ENCODE measurements at regions of chr7 and their contacts with region 1.

Region 1: GRCh38 chr7:27196287-27196767 is 3.6 kb downstream of the HOXA13 start:
- DNase-seq: peak; percentile 16
- ATAC-seq: peak; percentile 68
- H3K4me3 ChIP-seq: no peak overlapping the region
- H3K27ac ChIP-seq: no peak overlapping the region
- H3K4me1 ChIP-seq: no peaks in the 10 kb centered on the region; the same call in 1 of the 2 replicates
- H3K27me3 ChIP-seq: peaks cover 22 to 40% of the 10 kb centered on the region in 2 experiments
- CTCF ChIP-seq: peak; percentile 70 to 89 (median 74)
- EP300 ChIP-seq: no peak
- POLR2A ChIP-seq: no peak
- RAD21 ChIP-seq: peak; percentile 94

Region 2: DNA sequence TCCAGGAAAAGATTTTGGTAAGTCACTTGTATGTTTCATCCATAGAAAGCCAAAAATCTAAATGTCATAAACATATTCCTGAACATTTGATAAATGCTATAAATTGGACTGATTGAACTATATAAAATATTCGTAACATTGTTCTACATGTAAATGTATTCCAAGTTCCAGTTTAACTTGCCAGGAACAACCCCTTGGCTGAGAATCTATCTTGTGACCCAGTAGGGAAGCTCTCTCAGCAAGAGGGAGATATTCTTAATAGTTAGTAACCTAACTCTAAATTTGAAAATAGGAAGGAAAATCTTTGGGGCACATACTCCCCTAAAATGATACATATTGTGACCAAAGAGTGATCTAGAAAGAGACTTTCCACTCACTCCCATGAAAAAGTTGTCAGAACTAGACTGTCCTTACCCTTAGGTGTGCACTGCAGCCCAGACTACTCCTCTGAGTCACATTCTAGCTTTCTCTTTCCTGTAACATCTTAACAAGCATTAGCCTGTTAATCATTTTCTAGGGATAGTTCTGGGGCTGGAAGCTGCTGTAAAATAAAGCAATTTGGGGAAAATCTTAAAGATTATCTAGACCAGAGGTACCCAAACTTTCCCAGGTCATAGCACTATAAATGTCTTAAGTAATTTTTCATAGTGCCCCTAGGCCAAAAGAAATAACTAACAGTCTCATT is 258.2 kb before region 1 on chr7:
- CTCF ChIA-PET with region 1: no interaction called
- POLR2A ChIA-PET with region 1: no interaction called
- RAD21 ChIA-PET with region 1: no interaction called
- SMC1A ChIA-PET with region 1: no interaction called
- in situ Hi-C with region 1: no loop called
- intact Hi-C with region 1: no loop called
- DNase-seq: no peak
- ATAC-seq: peak; percentile 41; the same call in 1 of the 3 replicates
- H3K4me3 ChIP-seq: no peak overlapping the region
- H3K27ac ChIP-seq: no peak overlapping the region
- H3K4me1 ChIP-seq: no peaks in the 10 kb centered on the region
- H3K27me3 ChIP-seq: no peaks in the 10 kb centered on the region; a peak in 1 of 4 replicates
- CTCF ChIP-seq: no peak
- EP300 ChIP-seq: no peak
- POLR2A ChIP-seq: no peak
- RAD21 ChIP-seq: no peak

Region 3: GRCh38 chr7:27605689-27606269 is 409.5 kb after region 1 on chr7:
- CTCF ChIA-PET with region 1: interaction called, 50 read pairs
- POLR2A ChIA-PET with region 1: no interaction called
- RAD21 ChIA-PET with region 1: interaction called, 32 read pairs
- SMC1A ChIA-PET with region 1: interaction called, 14 read pairs
- in situ Hi-C with region 1: no loop called
- intact Hi-C with region 1: loop called (anchors 2 kb)
- DNase-seq: no peak
- ATAC-seq: no peak
- H3K4me3 ChIP-seq: no peak overlapping the region
- H3K27ac ChIP-seq: no peak overlapping the region
- H3K4me1 ChIP-seq: no peaks in the 10 kb centered on the region
- H3K27me3 ChIP-seq: no peaks in the 10 kb centered on the region
- CTCF ChIP-seq: peak in 2 of 3 experiments; percentile 33 to 44; a peak in 4 of 6 replicates
- EP300 ChIP-seq: no peak
- POLR2A ChIP-seq: no peak
- RAD21 ChIP-seq: peak; percentile 30

Region 4: GRCh38 chr7:27784393-27785053 is 588.2 kb after region 1 on chr7:
- CTCF ChIA-PET with region 1: interaction called, 8 read pairs
- POLR2A ChIA-PET with region 1: no interaction called
- RAD21 ChIA-PET with region 1: interaction called, 5 read pairs
- SMC1A ChIA-PET with region 1: interaction called, 6 read pairs
- in situ Hi-C with region 1: loop called (anchors 5 kb)
- intact Hi-C with region 1: loop called (anchors 5 kb)
- DNase-seq: no peak
- ATAC-seq: peak; percentile 60
- H3K4me3 ChIP-seq: no peak overlapping the region
- H3K27ac ChIP-seq: no peak overlapping the region
- H3K4me1 ChIP-seq: no peaks in the 10 kb centered on the region
- H3K27me3 ChIP-seq: no peaks in the 10 kb centered on the region
- CTCF ChIP-seq: peak; percentile 33 to 45 (median 39); a peak in 5 of 6 replicates
- EP300 ChIP-seq: no peak
- POLR2A ChIP-seq: no peak
- RAD21 ChIP-seq: 0 out of 2 replicates have a peak, but pooled peaks have one; percentile 15

Region 5: GRCh38 chr7:28020302-28020940 is 824.1 kb after region 1 on chr7:
- CTCF ChIA-PET with region 1: interaction called, 36 read pairs
- POLR2A ChIA-PET with region 1: no interaction called
- RAD21 ChIA-PET with region 1: interaction called, 7 read pairs
- SMC1A ChIA-PET with region 1: interaction called, 6 read pairs
- in situ Hi-C with region 1: loop called (anchors 5 kb)
- intact Hi-C with region 1: loop called (anchors 1 kb)
- DNase-seq: peak; percentile 43
- ATAC-seq: peak; percentile 93
- H3K4me3 ChIP-seq: no peak overlapping the region
- H3K27ac ChIP-seq: no peak overlapping the region
- H3K4me1 ChIP-seq: no peaks in the 10 kb centered on the region
- H3K27me3 ChIP-seq: peaks cover 0 to 1% of the 10 kb centered on the region in 2 experiments; a peak in 1 of 4 replicates
- CTCF ChIP-seq: peak; percentile 82 to 93 (median 83)
- EP300 ChIP-seq: no peak
- POLR2A ChIP-seq: no peak
- RAD21 ChIP-seq: peak; percentile 89

Region 6: GRCh38 chr7:28078036-28078901 is 881.9 kb after region 1 on chr7:
- CTCF ChIA-PET with region 1: interaction called, 9 read pairs
- POLR2A ChIA-PET with region 1: no interaction called
- RAD21 ChIA-PET with region 1: interaction called, 3 read pairs
- SMC1A ChIA-PET with region 1: interaction called, 7 read pairs
- in situ Hi-C with region 1: no loop called
- intact Hi-C with region 1: loop called (anchors 1 kb)
- DNase-seq: no peak
- ATAC-seq: peak; percentile 63; the same call in 2 of the 3 replicates
- H3K4me3 ChIP-seq: no peak overlapping the region
- H3K27ac ChIP-seq: no peak overlapping the region
- H3K4me1 ChIP-seq: no peaks in the 10 kb centered on the region
- H3K27me3 ChIP-seq: no peaks in the 10 kb centered on the region; a peak in 3 of 4 replicates
- CTCF ChIP-seq: peak; percentile 88 to 99 (median 96)
- EP300 ChIP-seq: no peak
- POLR2A ChIP-seq: no peak
- RAD21 ChIP-seq: peak; percentile 68

Measured in GM12878 (cell line).